ENCODE measurements at regions of chr3 and their contacts with region 1.

Region 1: DNA sequence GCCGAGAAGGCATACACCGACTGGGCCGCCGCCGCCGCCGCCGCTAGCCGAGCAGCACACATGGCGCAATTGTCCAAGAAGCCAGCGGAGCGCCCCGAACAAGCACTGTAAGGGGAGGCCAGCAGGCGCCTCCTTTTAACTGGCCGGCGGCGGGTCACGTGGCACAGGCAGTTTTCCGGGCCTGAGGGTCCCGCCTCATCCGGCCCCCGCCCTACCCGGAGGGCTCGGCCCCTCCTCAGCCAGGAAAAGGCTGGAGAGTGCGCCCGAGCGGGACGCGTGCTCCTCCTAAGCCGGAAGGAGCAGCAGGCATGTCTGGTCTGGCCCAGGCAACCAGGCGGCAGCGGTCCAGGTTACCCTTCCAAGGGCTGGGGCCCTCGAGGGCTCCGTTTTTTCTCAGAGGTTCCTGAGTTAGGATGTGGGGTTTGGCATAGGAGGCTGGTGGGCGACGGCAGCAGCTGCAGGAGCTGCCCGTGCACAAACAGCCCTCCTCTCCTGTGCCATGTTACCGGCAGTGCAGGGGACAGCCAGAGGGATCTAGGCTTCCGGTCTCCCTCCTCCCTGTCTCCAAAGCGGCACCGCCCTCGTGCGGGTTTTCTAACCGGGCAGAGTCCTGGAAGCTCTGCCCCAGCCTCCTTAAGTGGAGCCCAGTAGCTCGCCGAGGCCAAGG is at the start of gene GPX1:
- DNase-seq: peak; percentile 98
- H3K4me3 Mint-ChIP-seq: peak within 1 kb of the TSS; percentile 95
- H3K27ac Mint-ChIP-seq: peak within 1 kb of the TSS; percentile 78
- H3K4me1 Mint-ChIP-seq: peaks cover 14% of the 10 kb centered on the region
- H3K27me3 Mint-ChIP-seq: no peaks in the 10 kb centered on the region
- CTCF ChIP-seq: no peak
- total RNA-seq, gene GPX1: 576 and 589 TPM in 2 replicates

Region 2: DNA sequence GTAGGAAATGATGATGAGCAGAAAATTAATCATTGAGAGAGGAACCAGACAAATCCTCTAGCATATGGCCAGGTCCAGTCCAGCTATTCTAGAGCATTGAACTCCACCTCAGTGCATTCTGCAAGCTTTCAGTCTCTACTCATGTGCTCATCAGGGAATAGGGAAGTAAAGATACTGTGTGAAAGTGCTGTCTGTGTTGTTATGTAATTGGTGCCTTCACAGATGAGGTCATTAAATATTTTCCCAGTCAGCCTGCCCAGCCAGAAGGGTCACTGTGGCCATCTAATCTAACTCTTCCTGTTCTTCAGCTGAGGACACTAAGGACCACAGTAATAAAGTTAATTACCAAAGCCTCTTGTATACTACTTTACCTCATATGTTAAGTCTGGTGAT is 109.5 kb before region 1 on chr3:
- CTCF ChIA-PET with region 1: no interaction called
- POLR2A ChIA-PET with region 1: no interaction called
- intact Hi-C with region 1: no loop called
- DNase-seq: no peak
- H3K4me3 Mint-ChIP-seq: no peak overlapping the region
- H3K27ac Mint-ChIP-seq: no peak overlapping the region
- H3K4me1 Mint-ChIP-seq: peaks cover 5% of the 10 kb centered on the region
- H3K27me3 Mint-ChIP-seq: no peaks in the 10 kb centered on the region
- CTCF ChIP-seq: no peak

Region 3: GRCh38 chr3:49327485-49327884 is 30.9 kb before region 1 on chr3:
- CTCF ChIA-PET with region 1: no interaction called
- POLR2A ChIA-PET with region 1: interaction called, 3 read pairs
- intact Hi-C with region 1: loop called (anchors 1 kb)
- DNase-seq: peak; percentile 37
- H3K4me3 Mint-ChIP-seq: no peak overlapping the region
- H3K27ac Mint-ChIP-seq: no peak overlapping the region
- H3K4me1 Mint-ChIP-seq: no peaks in the 10 kb centered on the region
- H3K27me3 Mint-ChIP-seq: no peaks in the 10 kb centered on the region
- CTCF ChIP-seq: no peak

Region 4: GRCh38 chr3:49377483-49377882 is 19.1 kb after region 1 on chr3:
- CTCF ChIA-PET with region 1: interaction called, 3 read pairs
- POLR2A ChIA-PET with region 1: interaction called, 13 read pairs
- intact Hi-C with region 1: loop called (anchors 1 kb)
- DNase-seq: peak; percentile 60
- H3K4me3 Mint-ChIP-seq: no peak overlapping the region
- H3K27ac Mint-ChIP-seq: peak overlapping the region; percentile 70
- H3K4me1 Mint-ChIP-seq: peaks cover 20% of the 10 kb centered on the region
- H3K27me3 Mint-ChIP-seq: no peaks in the 10 kb centered on the region
- CTCF ChIP-seq: no peak

Region 5: DNA sequence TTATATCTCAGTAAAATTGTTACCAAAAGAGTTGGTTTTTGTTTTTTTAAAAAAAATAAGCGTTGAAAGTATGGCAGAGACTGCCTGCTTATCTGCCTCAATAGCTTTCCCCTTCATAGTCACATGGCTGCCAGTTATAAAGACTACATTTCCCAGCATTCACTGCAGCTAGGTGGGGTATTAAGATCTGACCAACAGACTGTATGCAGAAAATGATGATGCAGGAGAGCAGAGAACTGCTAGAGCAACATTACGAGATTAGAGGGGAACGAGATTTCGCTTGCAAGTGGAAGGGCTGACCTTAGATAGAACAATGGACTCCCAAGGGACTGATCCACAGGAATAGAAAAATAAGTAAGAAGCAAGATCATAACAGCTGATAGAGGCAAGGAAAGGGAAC is 39.1 kb after region 1 on chr3:
- CTCF ChIA-PET with region 1: no interaction called
- POLR2A ChIA-PET with region 1: no interaction called
- intact Hi-C with region 1: no loop called
- DNase-seq: no peak
- H3K4me3 Mint-ChIP-seq: no peak overlapping the region
- H3K27ac Mint-ChIP-seq: no peak overlapping the region
- H3K4me1 Mint-ChIP-seq: peaks cover 18% of the 10 kb centered on the region
- H3K27me3 Mint-ChIP-seq: no peaks in the 10 kb centered on the region
- CTCF ChIP-seq: no peak

Measured in MCF 10A (cell line).